Activated CD8-positive, alpha-beta T cell treated with anti-CD3 and anti-CD28 coated beads for 36 hours (primary cell): ENCODE measurements at regions of chr17 and their contacts with region 1.

Region 1: DNA sequence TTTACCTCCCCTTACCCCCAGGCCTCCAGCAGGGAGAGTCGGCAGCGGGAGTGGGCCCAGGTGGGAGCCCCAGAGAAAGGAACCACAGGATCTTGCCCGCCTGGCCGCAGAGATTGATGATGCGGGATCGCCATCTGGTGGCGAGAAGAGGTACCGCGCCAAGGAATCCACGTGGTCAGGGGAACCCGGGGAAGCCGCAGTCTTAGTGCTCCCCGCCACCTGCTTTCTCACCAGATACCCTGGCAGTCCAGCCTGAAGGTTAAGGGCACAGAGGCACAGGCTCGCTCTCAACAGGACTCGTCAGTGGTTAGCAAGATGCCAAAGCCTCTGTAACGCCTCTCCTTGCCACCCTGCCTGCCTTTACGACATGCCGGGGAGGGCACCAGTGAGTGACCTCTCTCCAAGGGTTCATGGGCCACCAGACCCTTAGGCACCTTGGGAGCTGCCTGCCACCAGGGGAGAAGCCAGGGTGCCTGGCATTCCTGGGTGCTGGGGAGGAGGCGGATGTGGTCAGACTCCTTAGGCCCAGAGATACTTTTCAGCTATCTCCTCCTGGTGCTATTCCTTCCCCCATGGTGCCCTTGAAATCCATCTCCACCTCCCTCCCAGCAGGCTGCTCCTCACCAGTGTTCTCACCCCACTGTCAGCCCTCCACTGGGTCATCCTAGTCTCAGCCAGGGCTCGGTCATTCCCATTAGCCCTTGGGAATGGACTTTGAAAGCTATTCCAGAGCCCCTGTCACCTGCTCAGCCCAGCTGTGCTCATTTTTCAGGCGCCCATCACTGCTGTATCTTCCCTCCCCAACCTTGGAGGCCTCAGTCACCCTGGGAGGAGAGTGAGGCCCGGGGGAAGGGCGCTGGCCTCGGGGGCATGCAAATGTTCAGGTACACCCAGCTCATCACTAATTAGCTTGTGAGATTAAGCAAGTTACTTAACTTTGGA is 5.5 kb upstream of the RHBDF2 start:
- DNase-seq: peak; percentile 92
- ATAC-seq: peak; percentile 89
- H3K4me3 Mint-ChIP-seq: no peak overlapping the region
- H3K27ac Mint-ChIP-seq: no peak overlapping the region
- H3K4me1 Mint-ChIP-seq: peaks cover 15% of the 10 kb centered on the region
- H3K27me3 Mint-ChIP-seq: no peaks in the 10 kb centered on the region
- CTCF ChIP-seq: peak; percentile 82

Region 2: GRCh38 chr17:76458580-76459490 is 47.8 kb before region 1 on chr17:
- CTCF ChIA-PET with region 1: interaction called, 83 read pairs
- POLR2A ChIA-PET with region 1: interaction called, 3 read pairs
- intact Hi-C with region 1: no loop called
- DNase-seq: peak; percentile 31
- ATAC-seq: no peak
- H3K4me3 Mint-ChIP-seq: no peak overlapping the region
- H3K27ac Mint-ChIP-seq: no peak overlapping the region
- H3K4me1 Mint-ChIP-seq: no peaks in the 10 kb centered on the region
- H3K27me3 Mint-ChIP-seq: no peaks in the 10 kb centered on the region
- CTCF ChIP-seq: no peak

Region 3: GRCh38 chr17:76492989-76493501 is 13.6 kb before region 1 on chr17:
- CTCF ChIA-PET with region 1: interaction called, 22 read pairs
- POLR2A ChIA-PET with region 1: interaction called, 3 read pairs
- intact Hi-C with region 1: no loop called
- DNase-seq: peak; percentile 80
- ATAC-seq: peak; percentile 64
- H3K4me3 Mint-ChIP-seq: peak overlapping the region; percentile 58
- H3K27ac Mint-ChIP-seq: peak overlapping the region; percentile 90
- H3K4me1 Mint-ChIP-seq: peaks cover 55% of the 10 kb centered on the region
- H3K27me3 Mint-ChIP-seq: no peaks in the 10 kb centered on the region
- CTCF ChIP-seq: no peak